HCT116 (cell line): ENCODE measurements at regions of chr4 and their contacts with region 1.

Region 1: DNA sequence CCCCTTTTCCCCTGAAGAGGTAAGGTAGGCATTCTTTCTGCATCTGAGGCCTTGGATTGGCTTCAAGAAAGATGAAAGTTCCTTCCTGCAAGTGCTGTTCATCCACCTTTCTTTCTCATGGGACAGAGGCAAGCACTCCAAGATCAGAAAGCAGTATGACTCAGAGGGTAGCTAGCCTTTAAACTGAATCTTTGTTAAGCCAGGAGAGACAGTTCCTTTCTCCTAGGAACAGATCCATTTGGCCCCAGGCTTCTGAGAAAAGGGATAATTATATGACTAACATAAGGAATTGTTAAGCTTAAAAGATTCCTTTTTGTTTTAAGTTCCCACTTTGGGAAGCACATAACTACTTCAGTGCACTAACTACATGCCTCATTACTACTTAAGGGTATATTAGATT is 192.0 kb downstream of the PPP3CA start:
- DNase-seq: peak; percentile 97
- ATAC-seq: peak; percentile 81
- H3K4me3 ChIP-seq: 0 out of 4 replicates have a peak overlapping the region, but pooled peaks of 1 of the 2 experiments have one; percentile 5
- H3K27ac ChIP-seq: peak overlapping the region; percentile 98
- H3K4me1 ChIP-seq: peaks cover 87 to 100% of the 10 kb centered on the region in 2 experiments
- H3K27me3 ChIP-seq: no peaks in the 10 kb centered on the region
- CTCF ChIP-seq: no peak
- POLR2A ChIP-seq: no peak
- RAD21 ChIP-seq: peak; percentile 14

Region 2: DNA sequence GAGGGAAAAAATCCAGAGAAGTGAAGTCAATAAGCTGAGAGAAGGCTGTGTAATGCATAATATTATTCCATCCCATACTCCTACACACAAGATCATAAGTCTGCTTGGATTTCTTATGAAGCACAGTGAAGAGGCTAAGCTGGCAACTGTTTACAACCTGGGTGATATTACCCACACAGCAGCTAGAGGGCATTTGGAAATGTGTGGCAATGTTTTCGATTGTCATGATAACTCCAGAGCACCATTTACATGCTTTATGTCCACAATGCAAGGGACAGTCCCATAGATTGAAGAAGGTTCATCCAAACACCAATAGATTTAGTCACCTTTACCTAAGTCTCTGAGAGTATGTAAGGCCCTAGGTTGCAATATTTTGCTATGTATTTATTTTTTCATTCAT is 220.3 kb before region 1 on chr4:
- CTCF ChIA-PET with region 1: no interaction called
- POLR2A ChIA-PET with region 1: no interaction called
- RAD21 ChIA-PET with region 1: no interaction called
- intact Hi-C with region 1: loop called (anchors 10 kb)
- DNase-seq: peak; percentile 38
- ATAC-seq: peak; percentile 91
- H3K4me3 ChIP-seq: no peak overlapping the region
- H3K27ac ChIP-seq: no peak overlapping the region
- H3K4me1 ChIP-seq: peaks cover 2 to 23% of the 10 kb centered on the region in 2 experiments; a peak in 3 of 4 replicates
- H3K27me3 ChIP-seq: no peaks in the 10 kb centered on the region
- CTCF ChIP-seq: peak; percentile 20 to 69 (median 67); a peak in 5 of 6 replicates
- POLR2A ChIP-seq: no peak
- RAD21 ChIP-seq: peak; percentile 62

Region 3: GRCh38 chr4:101103381-101104142 is 51.8 kb before region 1 on chr4:
- CTCF ChIA-PET with region 1: no interaction called
- POLR2A ChIA-PET with region 1: interaction called, 5 read pairs
- RAD21 ChIA-PET with region 1: no interaction called
- intact Hi-C with region 1: loop called (anchors 5 kb)
- DNase-seq: no peak
- ATAC-seq: peak; percentile 69
- H3K4me3 ChIP-seq: no peak overlapping the region
- H3K27ac ChIP-seq: peak overlapping the region; percentile 95
- H3K4me1 ChIP-seq: peaks cover 69 to 74% of the 10 kb centered on the region in 2 experiments
- H3K27me3 ChIP-seq: no peaks in the 10 kb centered on the region
- CTCF ChIP-seq: no peak
- POLR2A ChIP-seq: no peak
- RAD21 ChIP-seq: no peak

Region 4: GRCh38 chr4:101123231-101123630 is 32.1 kb before region 1 on chr4:
- CTCF ChIA-PET with region 1: interaction called, 3 read pairs
- POLR2A ChIA-PET with region 1: interaction called, 26 read pairs
- RAD21 ChIA-PET with region 1: interaction called in 1 of 2 experiments, 4 read pairs
- intact Hi-C with region 1: no loop called
- DNase-seq: peak; percentile 94
- ATAC-seq: peak; percentile 74
- H3K4me3 ChIP-seq: no peak overlapping the region
- H3K27ac ChIP-seq: peak overlapping the region; percentile 96
- H3K4me1 ChIP-seq: peaks cover 84 to 97% of the 10 kb centered on the region in 2 experiments
- H3K27me3 ChIP-seq: no peaks in the 10 kb centered on the region
- CTCF ChIP-seq: no peak
- POLR2A ChIP-seq: no peak
- RAD21 ChIP-seq: peak; percentile 25; the same call in 1 of the 2 replicates